PC-9 (cell line): ENCODE measurements at regions of chr1 and their contacts with region 1.

Region 1: DNA sequence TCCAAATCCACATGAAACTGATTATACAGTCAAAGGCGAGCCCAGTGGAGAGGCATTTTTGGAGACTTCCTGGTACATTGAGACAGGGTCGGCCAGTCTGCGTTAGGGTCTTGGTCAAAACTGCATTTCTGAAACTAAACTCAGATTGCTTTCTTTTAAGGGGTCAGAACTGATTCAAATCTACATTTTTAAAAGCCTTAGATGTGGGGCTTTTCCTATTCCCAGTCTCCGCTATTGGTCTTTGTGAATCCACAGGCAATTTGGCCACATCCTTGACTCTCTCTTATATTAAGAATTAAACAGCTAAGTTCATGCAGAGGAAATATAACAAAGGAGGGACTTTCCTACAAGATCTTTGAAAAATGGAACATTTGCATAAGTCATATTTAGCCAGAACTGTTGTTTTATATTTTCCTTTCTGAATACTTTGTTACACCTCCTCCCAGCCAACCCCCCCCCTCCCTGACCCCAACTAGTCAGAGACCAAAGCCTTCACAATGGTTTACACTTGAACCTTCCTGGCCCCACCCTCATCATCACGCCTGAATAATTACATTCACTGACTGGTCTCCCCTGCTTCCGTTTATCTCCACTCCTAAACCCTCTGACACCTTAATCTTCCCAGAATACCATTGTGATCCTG is 30.9 kb downstream of the SELL start:
- DNase-seq: peak in 1 of 2 experiments; percentile 37
- H3K4me3 ChIP-seq: no peak overlapping the region
- H3K27ac ChIP-seq: peak overlapping the region; percentile 47
- H3K4me1 ChIP-seq: peaks cover 48% of the 10 kb centered on the region
- H3K27me3 ChIP-seq: no peaks in the 10 kb centered on the region
- CTCF ChIP-seq: no peak

Region 2: DNA sequence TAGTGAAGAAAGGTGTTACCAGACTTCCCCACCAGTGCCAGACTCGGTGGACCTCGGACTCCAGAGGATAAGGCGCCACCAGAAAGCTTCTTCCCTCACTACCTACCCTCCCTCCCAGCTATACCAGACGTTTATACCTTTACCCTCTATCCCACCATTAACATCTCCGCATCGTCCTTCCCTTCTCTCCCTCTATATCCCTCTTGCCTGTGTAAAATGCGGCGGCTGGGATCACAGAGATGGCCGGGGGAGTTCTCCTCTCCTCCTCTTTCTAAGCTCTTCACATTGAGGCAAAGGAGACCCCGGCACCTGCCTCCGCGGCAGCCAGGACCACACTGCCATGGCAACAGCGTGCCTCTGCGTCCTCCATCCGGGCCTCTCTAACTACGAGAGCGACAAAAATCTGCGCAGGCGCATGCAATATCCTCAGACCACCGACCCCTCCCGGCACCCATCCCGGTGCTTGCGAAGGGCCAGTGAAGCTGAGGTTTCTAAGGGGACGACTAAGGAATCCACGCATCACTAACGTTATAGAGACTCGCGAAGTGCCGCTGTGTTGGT is 253.3 kb before region 1 on chr1 and contains the start of gene CCDC181:
- CTCF ChIA-PET with region 1: no interaction called
- POLR2A ChIA-PET with region 1: interaction called, 13 read pairs
- intact Hi-C with region 1: no loop called
- DNase-seq: no peak
- H3K4me3 ChIP-seq: no peak within 1 kb of the TSS
- H3K27ac ChIP-seq: no peak within 1 kb of the TSS
- H3K4me1 ChIP-seq: no peaks in the 10 kb centered on the region
- H3K27me3 ChIP-seq: no peaks in the 10 kb centered on the region
- CTCF ChIP-seq: no peak
- total RNA-seq, gene CCDC181: 0.37 TPM in 1 of 2 replicates, not detected in the other

Region 3: GRCh38 chr1:169586395-169587255 is 93.9 kb before region 1 on chr1 and contains the start of gene F5:
- CTCF ChIA-PET with region 1: interaction called, 11 read pairs
- POLR2A ChIA-PET with region 1: no interaction called
- intact Hi-C with region 1: no loop called
- DNase-seq: peak; percentile 63 to 64
- H3K4me3 ChIP-seq: peak within 1 kb of the TSS; percentile 42
- H3K27ac ChIP-seq: no peak within 1 kb of the TSS
- H3K4me1 ChIP-seq: peaks cover 5% of the 10 kb centered on the region
- H3K27me3 ChIP-seq: no peaks in the 10 kb centered on the region
- CTCF ChIP-seq: peak; percentile 64
- total RNA-seq, gene F5: not detected in 2 replicates

Region 4: GRCh38 chr1:169601093-169601881 is 79.2 kb before region 1 on chr1:
- CTCF ChIA-PET with region 1: interaction called, 5 read pairs
- POLR2A ChIA-PET with region 1: no interaction called
- intact Hi-C with region 1: loop called (anchors 1 kb)
- DNase-seq: no peak
- H3K4me3 ChIP-seq: no peak overlapping the region
- H3K27ac ChIP-seq: no peak overlapping the region
- H3K4me1 ChIP-seq: no peaks in the 10 kb centered on the region
- H3K27me3 ChIP-seq: no peaks in the 10 kb centered on the region
- CTCF ChIP-seq: peak; percentile 76

Region 5: GRCh38 chr1:170145770-170146676 is 465.5 kb after region 1 on chr1 and contains the start of gene NTMT2:
- CTCF ChIA-PET with region 1: no interaction called
- POLR2A ChIA-PET with region 1: no interaction called
- intact Hi-C with region 1: no loop called
- DNase-seq: no peak
- H3K4me3 ChIP-seq: no peak within 1 kb of the TSS
- H3K27ac ChIP-seq: no peak within 1 kb of the TSS
- H3K4me1 ChIP-seq: no peaks in the 10 kb centered on the region
- H3K27me3 ChIP-seq: no peaks in the 10 kb centered on the region
- CTCF ChIP-seq: no peak
- total RNA-seq, gene NTMT2: not detected in 2 replicates

Region 6: GRCh38 chr1:171623651-171624331 is 1943.3 kb after region 1 on chr1:
- CTCF ChIA-PET with region 1: no interaction called
- POLR2A ChIA-PET with region 1: interaction called, 12 read pairs
- intact Hi-C with region 1: no loop called
- DNase-seq: no peak
- H3K4me3 ChIP-seq: no peak overlapping the region
- H3K27ac ChIP-seq: no peak overlapping the region
- H3K4me1 ChIP-seq: no peaks in the 10 kb centered on the region
- H3K27me3 ChIP-seq: no peaks in the 10 kb centered on the region
- CTCF ChIP-seq: no peak